ENCODE measurements at regions of chr11 and their contacts with region 1.

Region 1: GRCh38 chr11:117226388-117227385 is 5.2 kb downstream of the PCSK7 start:
- DNase-seq: peak; percentile 86
- H3K4me3 Mint-ChIP-seq: no peak overlapping the region
- H3K27ac Mint-ChIP-seq: no peak overlapping the region
- H3K4me1 Mint-ChIP-seq: peaks cover 29% of the 10 kb centered on the region
- H3K27me3 Mint-ChIP-seq: no peaks in the 10 kb centered on the region
- CTCF ChIP-seq: peak; percentile 80

Region 2: GRCh38 chr11:116732271-116733042 is 494.2 kb before region 1 on chr11:
- CTCF ChIA-PET with region 1: interaction called, 4 read pairs
- POLR2A ChIA-PET with region 1: no interaction called
- intact Hi-C with region 1: loop called (anchors 5 kb)
- DNase-seq: peak; percentile 74
- H3K4me3 Mint-ChIP-seq: no peak overlapping the region
- H3K27ac Mint-ChIP-seq: no peak overlapping the region
- H3K4me1 Mint-ChIP-seq: peaks cover 7% of the 10 kb centered on the region
- H3K27me3 Mint-ChIP-seq: no peaks in the 10 kb centered on the region
- CTCF ChIP-seq: peak; percentile 87

Region 3: DNA sequence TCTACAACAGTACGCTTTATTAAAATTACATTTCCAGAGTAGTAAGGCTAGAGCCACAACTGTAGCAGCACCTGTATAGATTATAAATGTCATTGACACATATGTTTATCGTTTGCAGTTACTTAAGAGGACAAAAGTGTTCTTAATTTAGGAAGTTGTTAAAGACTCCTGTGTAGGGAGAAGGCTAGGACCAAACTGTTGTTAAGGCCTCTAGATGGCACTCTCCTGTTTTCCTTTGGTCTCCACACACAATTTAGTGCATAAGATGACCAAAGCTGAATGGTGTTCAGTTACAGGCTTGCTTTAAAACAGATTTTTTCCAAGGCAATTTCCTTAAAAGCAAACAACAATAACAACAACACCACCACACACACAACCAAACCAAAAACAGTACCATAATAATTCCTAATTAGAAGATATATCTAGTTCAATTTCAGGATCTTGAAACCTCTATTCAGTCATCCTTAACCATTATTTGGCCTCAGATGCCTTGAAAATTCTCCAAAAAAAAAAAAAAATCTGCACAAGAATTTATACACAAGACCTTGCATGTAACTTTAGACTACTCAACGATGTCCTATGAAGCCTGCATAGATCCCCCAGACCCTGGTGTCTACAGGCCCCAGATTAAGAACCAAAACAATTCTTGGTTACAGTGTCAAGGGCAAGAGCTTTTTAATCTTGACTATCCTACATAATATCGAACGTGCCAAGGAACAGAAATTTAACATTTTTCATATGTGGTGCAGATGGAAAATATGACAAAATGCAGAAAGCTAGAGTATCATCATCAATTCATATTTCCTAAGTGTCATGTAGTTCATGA is 346.7 kb before region 1 on chr11:
- CTCF ChIA-PET with region 1: interaction called, 5 read pairs
- POLR2A ChIA-PET with region 1: no interaction called
- intact Hi-C with region 1: loop called (anchors 2 kb)
- DNase-seq: peak; percentile 74
- H3K4me3 Mint-ChIP-seq: no peak overlapping the region
- H3K27ac Mint-ChIP-seq: no peak overlapping the region
- H3K4me1 Mint-ChIP-seq: no peaks in the 10 kb centered on the region
- H3K27me3 Mint-ChIP-seq: no peaks in the 10 kb centered on the region
- CTCF ChIP-seq: peak; percentile 60

Region 4: GRCh38 chr11:117178210-117179034 is 48.3 kb before region 1 on chr11 and contains the start of gene SIDT2:
- CTCF ChIA-PET with region 1: interaction called, 34 read pairs
- POLR2A ChIA-PET with region 1: interaction called, 23 read pairs
- intact Hi-C with region 1: no loop called
- DNase-seq: peak; percentile 91
- H3K4me3 Mint-ChIP-seq: peak within 1 kb of the TSS; percentile 90
- H3K27ac Mint-ChIP-seq: peak within 1 kb of the TSS; percentile 87
- H3K4me1 Mint-ChIP-seq: peaks cover 11% of the 10 kb centered on the region
- H3K27me3 Mint-ChIP-seq: no peaks in the 10 kb centered on the region
- CTCF ChIP-seq: no peak
- total RNA-seq, gene SIDT2: 17.5 and 18.4 TPM in 2 replicates

Region 5: DNA sequence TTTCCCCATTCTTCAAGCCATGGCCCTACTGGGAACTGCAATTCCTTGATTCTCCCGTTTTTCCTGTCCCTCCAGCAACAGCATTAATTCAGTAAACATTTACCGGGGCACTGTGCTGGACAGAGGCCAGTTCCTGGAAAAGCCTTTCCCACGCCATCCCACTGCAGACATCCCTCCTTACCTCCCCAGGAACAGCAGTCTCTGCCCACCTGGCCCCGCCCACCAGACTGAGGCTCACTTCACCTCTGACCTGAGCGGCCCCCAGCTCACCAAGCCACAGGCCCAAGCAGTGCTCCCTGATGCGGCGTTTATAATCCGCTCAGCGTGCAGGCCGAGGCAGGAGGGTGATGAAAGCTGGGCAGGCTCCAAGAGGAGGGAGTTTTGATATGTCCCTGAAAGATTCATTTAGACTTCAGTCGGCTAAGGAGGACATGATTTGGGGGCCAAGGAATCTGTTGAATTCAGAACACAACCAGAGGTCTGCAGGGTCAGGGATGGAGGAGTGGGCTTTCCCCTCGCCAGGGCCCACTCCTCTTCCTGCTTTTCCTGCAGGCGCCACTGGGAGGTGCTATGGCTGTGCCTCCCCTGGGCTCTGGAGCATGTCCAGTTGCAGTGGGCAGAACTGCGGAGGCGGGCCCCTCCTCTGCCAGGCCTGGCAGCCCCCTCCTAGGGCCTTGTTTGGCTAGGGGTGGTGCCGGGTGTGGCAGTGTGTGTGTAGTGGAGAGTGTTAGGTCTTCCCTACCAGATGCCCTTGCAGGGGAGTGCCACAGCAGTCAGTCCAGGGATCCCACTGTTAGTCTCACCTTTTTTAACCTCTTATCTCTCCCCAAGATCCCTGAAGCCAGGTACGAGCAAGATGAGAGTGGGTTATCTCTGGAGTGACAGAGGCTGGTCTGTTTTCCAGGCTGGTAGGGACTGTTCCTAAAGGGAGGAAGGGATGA is 28.9 kb before region 1 on chr11:
- CTCF ChIA-PET with region 1: interaction called, 12 read pairs
- POLR2A ChIA-PET with region 1: interaction called, 3 read pairs
- intact Hi-C with region 1: no loop called
- DNase-seq: no peak
- H3K4me3 Mint-ChIP-seq: no peak overlapping the region
- H3K27ac Mint-ChIP-seq: no peak overlapping the region
- H3K4me1 Mint-ChIP-seq: no peaks in the 10 kb centered on the region
- H3K27me3 Mint-ChIP-seq: no peaks in the 10 kb centered on the region
- CTCF ChIP-seq: peak; percentile 28

Measured in MCF 10A (cell line).